ENCODE measurements at regions of chr2 and their contacts with region 1.

Region 1: DNA sequence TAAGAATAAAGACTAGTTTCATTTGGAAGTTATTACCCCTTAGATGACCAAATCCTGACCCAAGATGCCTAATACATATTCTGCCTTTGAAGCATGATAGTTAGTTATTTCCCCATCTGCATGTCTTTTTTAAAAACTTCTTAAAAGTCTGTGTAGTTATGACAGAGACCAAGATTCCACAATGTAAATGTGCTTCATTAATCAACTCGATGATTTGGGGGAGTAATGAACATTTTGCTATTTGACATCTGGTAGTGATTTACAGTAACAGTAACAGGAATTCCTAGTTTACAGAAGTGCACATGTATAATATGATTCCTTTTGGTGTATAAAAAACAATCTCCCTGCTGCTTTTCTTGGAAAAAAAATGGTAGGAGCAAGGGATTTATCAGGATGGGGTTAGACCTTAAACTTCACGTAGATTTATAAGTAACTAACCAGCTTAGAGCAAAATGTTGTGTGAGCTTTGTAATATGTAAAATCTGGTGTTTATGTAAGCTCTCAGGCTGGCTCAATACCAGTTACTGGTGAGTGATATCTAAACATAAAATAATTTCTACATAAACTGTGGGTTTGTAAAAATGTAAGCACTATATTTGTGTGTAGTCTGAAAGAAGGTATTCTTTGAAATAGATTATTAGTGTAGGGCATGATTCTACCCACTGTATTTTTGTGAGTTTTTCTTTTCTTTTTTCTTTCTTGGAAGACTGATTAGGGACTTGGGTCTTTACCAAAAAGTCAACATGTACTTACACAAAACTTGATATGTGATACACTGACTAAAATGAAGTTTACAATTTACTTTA is 641.6 kb downstream of the EPHA4 start:
- DNase-seq: peak; percentile 92
- ATAC-seq: peak; percentile 90
- H3K4me3 ChIP-seq: no peak overlapping the region
- H3K27ac ChIP-seq: no peak overlapping the region
- H3K4me1 ChIP-seq: peaks cover 12% of the 10 kb centered on the region
- H3K27me3 ChIP-seq: peaks cover 18% of the 10 kb centered on the region
- CTCF ChIP-seq: no peak
- POLR2A ChIP-seq: no peak
- RAD21 ChIP-seq: no peak

Region 2: DNA sequence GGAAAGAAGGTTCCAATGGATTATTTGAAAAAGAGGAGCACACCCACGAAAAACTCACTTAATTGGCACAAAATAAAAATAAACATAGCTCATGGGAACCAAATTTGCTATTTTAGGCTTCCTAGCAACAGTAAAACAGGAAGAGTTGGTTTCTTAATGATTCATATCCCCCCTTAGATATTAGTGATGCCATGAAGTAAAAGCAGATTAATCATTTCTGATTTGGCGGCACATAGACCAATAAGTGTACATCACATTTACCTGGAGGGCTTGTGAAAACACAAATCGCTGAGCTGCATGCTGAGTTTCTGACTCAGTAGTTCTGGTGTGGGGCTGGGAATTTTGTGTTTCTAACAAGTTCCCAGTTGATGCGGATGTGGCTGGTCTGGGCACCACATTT is 1042.6 kb before region 1 on chr2:
- CTCF ChIA-PET with region 1: no interaction called
- POLR2A ChIA-PET with region 1: no interaction called
- dilution Hi-C with region 1: no loop called
- in situ Hi-C with region 1: no loop called
- intact Hi-C with region 1: no loop called
- DNase-seq: no peak
- ATAC-seq: no peak
- H3K4me3 ChIP-seq: no peak overlapping the region
- H3K27ac ChIP-seq: no peak overlapping the region
- H3K4me1 ChIP-seq: no peaks in the 10 kb centered on the region
- H3K27me3 ChIP-seq: no peaks in the 10 kb centered on the region
- CTCF ChIP-seq: no peak
- POLR2A ChIP-seq: no peak
- RAD21 ChIP-seq: no peak

Region 3: GRCh38 chr2:220821683-220822082 is 108.8 kb before region 1 on chr2:
- CTCF ChIA-PET with region 1: no interaction called
- POLR2A ChIA-PET with region 1: no interaction called
- dilution Hi-C with region 1: no loop called
- in situ Hi-C with region 1: no loop called
- intact Hi-C with region 1: no loop called
- DNase-seq: no peak
- ATAC-seq: no peak
- H3K4me3 ChIP-seq: no peak overlapping the region
- H3K27ac ChIP-seq: no peak overlapping the region
- H3K4me1 ChIP-seq: no peaks in the 10 kb centered on the region
- H3K27me3 ChIP-seq: peaks cover 2% of the 10 kb centered on the region; the same call in 1 of the 2 replicates
- CTCF ChIP-seq: no peak
- POLR2A ChIP-seq: no peak
- RAD21 ChIP-seq: no peak

Region 4: DNA sequence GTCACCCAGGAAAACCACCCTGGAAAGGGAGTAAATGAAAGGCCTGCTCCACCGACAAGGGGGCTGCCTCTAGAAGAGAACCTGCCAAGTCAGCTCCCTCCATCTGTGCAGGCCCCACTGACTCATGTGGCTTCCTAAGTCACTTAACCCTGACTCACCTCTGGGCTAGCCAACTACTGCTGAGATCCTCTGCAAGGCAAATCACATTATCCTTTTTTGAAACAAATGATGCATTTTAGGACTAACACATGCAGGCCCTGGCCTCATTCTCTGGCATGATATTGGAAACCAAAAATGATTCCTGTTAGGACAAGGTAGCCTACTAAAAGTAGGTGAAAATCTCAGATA is 167.1 kb after region 1 on chr2:
- CTCF ChIA-PET with region 1: no interaction called
- POLR2A ChIA-PET with region 1: no interaction called
- dilution Hi-C with region 1: no loop called
- in situ Hi-C with region 1: no loop called
- intact Hi-C with region 1: loop called (anchors 5 kb)
- DNase-seq: peak; percentile 92
- ATAC-seq: peak; percentile 91
- H3K4me3 ChIP-seq: no peak overlapping the region
- H3K27ac ChIP-seq: no peak overlapping the region
- H3K4me1 ChIP-seq: peaks cover 6% of the 10 kb centered on the region
- H3K27me3 ChIP-seq: no peaks in the 10 kb centered on the region
- CTCF ChIP-seq: no peak
- POLR2A ChIP-seq: no peak
- RAD21 ChIP-seq: no peak

Measured in IMR-90 (cell line).